MCF 10A (cell line): ENCODE measurements at regions of chr3 and their contacts with region 1.

Region 1: GRCh38 chr3:184561061-184561912 is at the start of gene EPHB3:
- DNase-seq: peak; percentile 99
- H3K4me3 Mint-ChIP-seq: peak within 1 kb of the TSS; percentile 83
- H3K27ac Mint-ChIP-seq: no peak within 1 kb of the TSS
- H3K4me1 Mint-ChIP-seq: peaks cover 38% of the 10 kb centered on the region
- H3K27me3 Mint-ChIP-seq: no peaks in the 10 kb centered on the region
- CTCF ChIP-seq: peak; percentile 99
- total RNA-seq, gene EPHB3: 4.0 and 5.4 TPM in 2 replicates

Region 2: GRCh38 chr3:184604039-184604601 is 42.8 kb after region 1 on chr3:
- CTCF ChIA-PET with region 1: interaction called, 4 read pairs
- POLR2A ChIA-PET with region 1: interaction called, 20 read pairs
- intact Hi-C with region 1: no loop called
- DNase-seq: no peak
- H3K4me3 Mint-ChIP-seq: no peak overlapping the region
- H3K27ac Mint-ChIP-seq: no peak overlapping the region
- H3K4me1 Mint-ChIP-seq: peaks cover 29% of the 10 kb centered on the region
- H3K27me3 Mint-ChIP-seq: no peaks in the 10 kb centered on the region
- CTCF ChIP-seq: no peak

Region 3: GRCh38 chr3:184696697-184697096 is 135.4 kb after region 1 on chr3:
- CTCF ChIA-PET with region 1: interaction called, 13 read pairs
- POLR2A ChIA-PET with region 1: interaction called, 5 read pairs
- intact Hi-C with region 1: no loop called
- DNase-seq: peak; percentile 49
- H3K4me3 Mint-ChIP-seq: no peak overlapping the region
- H3K27ac Mint-ChIP-seq: no peak overlapping the region
- H3K4me1 Mint-ChIP-seq: peaks cover 13% of the 10 kb centered on the region
- H3K27me3 Mint-ChIP-seq: no peaks in the 10 kb centered on the region
- CTCF ChIP-seq: no peak

Region 4: GRCh38 chr3:184711493-184712247 is 150.4 kb after region 1 on chr3 and contains the start of gene MAGEF1:
- CTCF ChIA-PET with region 1: interaction called, 14 read pairs
- POLR2A ChIA-PET with region 1: interaction called, 4 read pairs
- intact Hi-C with region 1: loop called (anchors 1 kb)
- DNase-seq: peak; percentile 77
- H3K4me3 Mint-ChIP-seq: peak within 1 kb of the TSS; percentile 84
- H3K27ac Mint-ChIP-seq: peak within 1 kb of the TSS; percentile 43
- H3K4me1 Mint-ChIP-seq: peaks cover 34% of the 10 kb centered on the region
- H3K27me3 Mint-ChIP-seq: no peaks in the 10 kb centered on the region
- CTCF ChIP-seq: no peak
- total RNA-seq, gene MAGEF1: 34.5 and 41.2 TPM in 2 replicates

Region 5: GRCh38 chr3:184740524-184741484 is 179.5 kb after region 1 on chr3:
- CTCF ChIA-PET with region 1: interaction called, 7 read pairs
- POLR2A ChIA-PET with region 1: interaction called, 68 read pairs
- intact Hi-C with region 1: no loop called
- DNase-seq: peak; percentile 96
- H3K4me3 Mint-ChIP-seq: peak overlapping the region; percentile 68
- H3K27ac Mint-ChIP-seq: peak overlapping the region; percentile 93
- H3K4me1 Mint-ChIP-seq: peaks cover 48% of the 10 kb centered on the region
- H3K27me3 Mint-ChIP-seq: no peaks in the 10 kb centered on the region
- CTCF ChIP-seq: no peak

Region 6: GRCh38 chr3:184757022-184757651 is 195.8 kb after region 1 on chr3:
- CTCF ChIA-PET with region 1: interaction called, 10 read pairs
- POLR2A ChIA-PET with region 1: interaction called, 13 read pairs
- intact Hi-C with region 1: no loop called
- DNase-seq: no peak
- H3K4me3 Mint-ChIP-seq: no peak overlapping the region
- H3K27ac Mint-ChIP-seq: no peak overlapping the region
- H3K4me1 Mint-ChIP-seq: peaks cover 17% of the 10 kb centered on the region
- H3K27me3 Mint-ChIP-seq: no peaks in the 10 kb centered on the region
- CTCF ChIP-seq: no peak

Region 7: GRCh38 chr3:184777336-184778004 is 216.2 kb after region 1 on chr3:
- CTCF ChIA-PET with region 1: interaction called, 33 read pairs
- POLR2A ChIA-PET with region 1: interaction called, 11 read pairs
- intact Hi-C with region 1: loop called (anchors 1 kb)
- DNase-seq: peak; percentile 87
- H3K4me3 Mint-ChIP-seq: no peak overlapping the region
- H3K27ac Mint-ChIP-seq: no peak overlapping the region
- H3K4me1 Mint-ChIP-seq: no peaks in the 10 kb centered on the region
- H3K27me3 Mint-ChIP-seq: no peaks in the 10 kb centered on the region
- CTCF ChIP-seq: peak; percentile 80